Naive thymus-derived CD4-positive, alpha-beta T cell (primary cell): ENCODE measurements at regions of chr19 and their contacts with region 1.

Region 1: DNA sequence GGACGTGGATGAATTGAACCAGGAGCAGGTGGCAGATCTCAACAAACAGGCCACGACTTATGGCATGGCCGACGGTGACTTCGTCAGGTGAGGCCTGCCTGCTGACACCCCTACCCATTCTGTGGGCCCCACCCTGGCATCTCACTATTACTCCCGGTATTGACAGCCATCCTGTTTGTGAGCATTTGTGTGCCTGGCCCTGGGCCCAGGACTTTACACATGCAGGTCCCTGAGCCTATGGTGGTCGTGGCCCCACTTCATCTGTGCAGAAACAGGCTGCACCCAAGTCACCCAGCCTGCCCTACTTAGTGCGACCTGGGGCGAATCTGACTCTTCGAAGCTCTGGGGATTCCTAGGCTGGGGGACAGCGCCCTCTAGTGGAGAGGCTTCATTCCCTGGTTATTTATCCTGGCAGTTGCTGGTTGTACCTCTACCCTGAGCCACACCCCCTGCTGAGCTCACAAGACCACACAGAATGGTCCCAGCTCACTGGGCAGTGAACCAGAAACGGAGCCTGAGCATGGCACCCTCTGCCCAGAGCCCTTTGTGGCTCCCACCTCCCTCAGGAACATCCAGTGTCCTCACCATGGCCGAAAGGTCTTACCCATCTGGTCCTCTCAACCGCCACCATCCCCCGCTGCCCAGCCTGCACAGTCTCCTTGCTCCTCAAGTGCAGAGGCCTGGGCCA is 16.9 kb downstream of the ZNF296 start:
- DNase-seq: peak; percentile 60 to 86 (median 75)
- ATAC-seq: peak; percentile 95
- H3K4me3 ChIP-seq: no peak overlapping the region
- H3K4me3 Mint-ChIP-seq: no peak overlapping the region
- H3K27ac ChIP-seq: no peak overlapping the region
- H3K27ac Mint-ChIP-seq: peak overlapping the region in 8 of 9 donors; percentile 16 to 90 (median 66)
- H3K4me1 ChIP-seq: no peaks in the 10 kb centered on the region
- H3K4me1 Mint-ChIP-seq: peaks cover 0 to 15% (median 3%) of the 10 kb centered on the region in 7 donors
- H3K27me3 ChIP-seq: no peaks in the 10 kb centered on the region
- H3K27me3 Mint-ChIP-seq: no peaks in the 10 kb centered on the region

Region 2: GRCh38 chr19:44611812-44612295 is 447.6 kb before region 1 on chr19:
- CTCF ChIA-PET with region 1: no interaction called
- POLR2A ChIA-PET with region 1: no interaction called
- intact Hi-C with region 1: no loop called
- DNase-seq: no peak
- ATAC-seq: no peak
- H3K4me3 ChIP-seq: no peak overlapping the region
- H3K4me3 Mint-ChIP-seq: no peak overlapping the region
- H3K27ac ChIP-seq: no peak overlapping the region
- H3K27ac Mint-ChIP-seq: peak overlapping the region in 2 of 9 donors; percentile 47 to 51
- H3K4me1 ChIP-seq: peaks cover 0 to 10% of the 10 kb centered on the region in 2 donors
- H3K4me1 Mint-ChIP-seq: peaks cover 0 to 17% (median 13%) of the 10 kb centered on the region in 7 donors
- H3K27me3 ChIP-seq: no peaks in the 10 kb centered on the region
- H3K27me3 Mint-ChIP-seq: no peaks in the 10 kb centered on the region

Region 3: GRCh38 chr19:44903602-44904425 is 155.6 kb before region 1 on chr19:
- CTCF ChIA-PET with region 1: no interaction called
- POLR2A ChIA-PET with region 1: no interaction called
- intact Hi-C with region 1: loop called in 1 of 2 experiments (anchors 1 kb)
- DNase-seq: peak; percentile 49 to 86 (median 70)
- ATAC-seq: peak; percentile 81
- H3K4me3 ChIP-seq: no peak overlapping the region
- H3K4me3 Mint-ChIP-seq: no peak overlapping the region
- H3K27ac ChIP-seq: no peak overlapping the region
- H3K27ac Mint-ChIP-seq: peak overlapping the region in 2 of 9 donors; percentile 19 to 49
- H3K4me1 ChIP-seq: no peaks in the 10 kb centered on the region
- H3K4me1 Mint-ChIP-seq: peaks cover 5 to 13% (median 10%) of the 10 kb centered on the region in 7 donors
- H3K27me3 ChIP-seq: peaks cover 0 to 4% of the 10 kb centered on the region in 2 donors
- H3K27me3 Mint-ChIP-seq: peaks cover 18 to 22% (median 20%) of the 10 kb centered on the region in 5 donors

Region 4: DNA sequence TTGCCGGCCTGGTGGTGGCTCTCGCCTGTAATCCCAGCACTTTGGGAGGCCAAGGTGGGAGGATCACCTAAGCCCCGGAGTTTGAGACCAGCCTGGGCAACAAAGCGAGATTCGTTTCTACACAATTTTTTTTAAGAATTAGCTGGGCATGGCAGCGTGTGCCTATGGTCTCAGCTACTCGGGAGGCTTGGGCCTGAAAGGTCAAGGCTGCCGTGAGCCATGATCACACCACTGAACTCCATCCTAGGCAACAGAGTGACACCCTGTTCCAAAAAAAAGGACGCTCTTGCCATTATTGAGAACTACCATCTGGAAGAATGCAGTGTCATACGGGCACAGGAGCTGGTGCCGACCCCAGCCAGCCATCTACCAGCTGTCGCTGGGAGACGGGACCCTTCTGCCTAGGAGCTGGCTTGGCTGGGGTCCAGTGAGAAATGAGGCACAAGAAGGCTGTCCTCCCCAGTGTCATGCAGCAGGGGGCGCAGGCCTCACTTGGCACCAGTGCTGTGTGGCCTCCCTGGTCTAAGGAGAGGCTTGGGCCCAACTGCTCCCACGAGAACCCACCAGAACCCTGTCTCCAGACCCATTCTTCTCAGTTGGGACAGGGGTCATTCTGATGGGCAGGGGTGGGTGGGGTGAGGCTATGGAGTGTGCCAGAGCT is 70.4 kb before region 1 on chr19:
- CTCF ChIA-PET with region 1: interaction called, 6 read pairs
- POLR2A ChIA-PET with region 1: no interaction called
- intact Hi-C with region 1: loop called in 1 of 2 experiments (anchors 1 kb)
- DNase-seq: peak; percentile 34 to 64 (median 55)
- ATAC-seq: peak; percentile 86
- H3K4me3 ChIP-seq: no peak overlapping the region
- H3K4me3 Mint-ChIP-seq: no peak overlapping the region
- H3K27ac ChIP-seq: no peak overlapping the region
- H3K27ac Mint-ChIP-seq: peak overlapping the region in 2 of 9 donors; percentile 41 to 85
- H3K4me1 ChIP-seq: no peaks in the 10 kb centered on the region
- H3K4me1 Mint-ChIP-seq: peaks cover 0 to 2% (median 0%) of the 10 kb centered on the region in 7 donors
- H3K27me3 ChIP-seq: no peaks in the 10 kb centered on the region
- H3K27me3 Mint-ChIP-seq: no peaks in the 10 kb centered on the region

Region 5: DNA sequence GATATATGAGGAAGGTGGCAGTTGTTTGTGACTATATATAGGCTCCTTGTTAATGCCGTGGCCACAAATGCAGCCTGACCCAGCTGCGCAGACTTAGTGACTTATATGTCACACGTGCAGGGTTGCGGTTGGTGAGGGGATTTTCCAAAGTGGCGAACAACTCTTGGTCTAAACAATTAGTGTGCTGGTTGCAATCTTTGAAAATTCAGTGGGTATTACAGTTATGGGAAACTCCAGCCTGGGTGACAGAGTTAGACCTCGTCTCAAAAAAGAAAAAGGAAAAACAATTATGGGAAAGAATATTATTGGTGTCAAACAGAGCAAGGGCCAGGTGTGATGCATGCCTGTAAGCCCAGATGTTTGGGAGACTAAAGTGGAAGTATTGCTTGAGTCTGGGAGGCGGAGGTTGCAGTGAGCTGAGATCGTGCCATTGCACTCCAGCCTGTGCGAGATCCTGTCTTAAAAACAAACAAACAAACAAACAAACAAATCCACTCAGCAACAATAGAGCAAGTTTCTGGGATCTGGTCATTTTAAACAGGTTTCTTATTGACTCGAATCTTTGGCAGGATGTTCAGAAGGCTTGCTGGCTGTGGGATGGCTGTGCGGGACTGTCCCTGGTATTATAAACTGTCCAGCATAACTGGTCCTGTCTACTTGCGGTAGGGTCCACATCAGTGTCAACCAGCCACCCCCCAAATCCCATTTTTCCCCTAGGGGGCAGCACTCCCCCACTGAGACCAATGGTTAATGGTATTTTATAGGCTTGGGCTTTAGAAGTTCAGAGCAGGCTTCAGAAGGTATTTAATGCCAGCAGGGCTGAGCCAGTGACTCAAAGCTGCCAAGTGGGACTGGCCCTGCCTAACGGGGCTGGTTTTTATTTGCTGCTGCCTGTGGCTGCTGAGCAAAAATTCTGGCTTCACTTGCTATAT is 42.8 kb before region 1 on chr19:
- CTCF ChIA-PET with region 1: no interaction called
- POLR2A ChIA-PET with region 1: no interaction called
- intact Hi-C with region 1: loop called in 1 of 2 experiments (anchors 1 kb)
- DNase-seq: peak; percentile 28 to 75 (median 61)
- ATAC-seq: peak; percentile 81
- H3K4me3 ChIP-seq: peak overlapping the region; percentile 4
- H3K4me3 Mint-ChIP-seq: peak overlapping the region in 1 of 10 donors; percentile 25
- H3K27ac ChIP-seq: peak overlapping the region; percentile 40
- H3K27ac Mint-ChIP-seq: peak overlapping the region; percentile 23 to 89 (median 54)
- H3K4me1 ChIP-seq: peaks cover 0 to 11% of the 10 kb centered on the region in 2 donors
- H3K4me1 Mint-ChIP-seq: peaks cover 0 to 9% (median 0%) of the 10 kb centered on the region in 7 donors
- H3K27me3 ChIP-seq: no peaks in the 10 kb centered on the region
- H3K27me3 Mint-ChIP-seq: no peaks in the 10 kb centered on the region

Region 6: GRCh38 chr19:45038931-45039893 is 20.2 kb before region 1 on chr19 and contains the start of gene CLASRP:
- CTCF ChIA-PET with region 1: interaction called, 8 read pairs
- POLR2A ChIA-PET with region 1: interaction called, 3 read pairs
- intact Hi-C with region 1: loop called in 1 of 2 experiments (anchors 1 kb)
- DNase-seq: peak; percentile 73 to 92 (median 85)
- ATAC-seq: peak; percentile 96
- H3K4me3 ChIP-seq: peak within 1 kb of the TSS; percentile 85
- H3K4me3 Mint-ChIP-seq: peak within 1 kb of the TSS; percentile 89 to 100 (median 99)
- H3K27ac ChIP-seq: peak within 1 kb of the TSS; percentile 100
- H3K27ac Mint-ChIP-seq: peak within 1 kb of the TSS; percentile 90 to 99 (median 98)
- H3K4me1 ChIP-seq: peaks cover 15 to 24% of the 10 kb centered on the region in 2 donors
- H3K4me1 Mint-ChIP-seq: peaks cover 26 to 43% (median 33%) of the 10 kb centered on the region in 7 donors
- H3K27me3 ChIP-seq: no peaks in the 10 kb centered on the region
- H3K27me3 Mint-ChIP-seq: no peaks in the 10 kb centered on the region
- total RNA-seq, gene CLASRP: 94.7 to 185 (median 163) TPM

Region 7: DNA sequence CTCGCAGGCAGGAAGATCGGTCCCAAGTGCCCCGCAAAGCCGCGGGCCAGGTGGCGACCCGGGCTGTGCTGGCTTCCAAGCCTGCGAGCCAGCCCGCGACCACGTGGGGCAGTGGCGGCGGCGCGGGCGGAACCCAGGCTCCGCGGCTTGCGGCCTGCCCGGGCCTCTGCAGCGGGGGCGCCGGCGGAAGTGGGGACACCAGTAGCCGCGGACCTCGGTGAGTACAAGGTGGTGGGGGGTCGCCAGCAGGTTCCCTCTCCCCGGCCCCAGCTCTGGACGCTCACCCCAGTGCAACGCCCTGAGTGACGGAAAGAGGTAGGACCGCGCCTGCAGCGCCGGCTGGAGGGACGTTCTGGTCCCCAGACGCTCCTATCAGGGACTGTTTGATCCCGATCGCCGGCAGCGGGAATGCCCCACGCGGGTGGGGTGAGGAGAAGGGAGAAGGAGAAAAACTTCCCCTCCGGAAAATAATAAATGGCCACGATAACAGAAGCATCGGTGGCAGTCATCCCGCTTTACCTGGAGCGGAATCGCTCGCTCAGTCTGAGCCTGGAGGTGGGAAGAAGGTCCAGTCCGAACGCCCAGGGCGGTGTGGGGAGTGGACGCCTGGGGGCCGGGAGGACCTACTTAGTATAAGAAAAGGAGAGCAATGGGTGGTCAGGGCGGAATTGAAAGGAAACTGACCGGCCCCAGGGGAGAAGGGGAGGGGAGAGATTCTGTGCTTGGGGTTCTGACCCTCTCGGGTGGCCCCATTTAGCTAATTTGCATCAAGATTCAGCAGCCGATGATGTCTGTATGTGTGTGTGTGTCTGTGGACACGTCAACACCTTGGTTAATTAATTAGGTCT is 19.9 kb after region 1 on chr19 and contains the start of gene GEMIN7:
- CTCF ChIA-PET with region 1: interaction called, 8 read pairs
- POLR2A ChIA-PET with region 1: no interaction called
- intact Hi-C with region 1: loop called in 1 of 2 experiments (anchors 1 kb)
- DNase-seq: peak; percentile 60 to 90 (median 75)
- ATAC-seq: peak; percentile 76
- H3K4me3 ChIP-seq: peak within 1 kb of the TSS; percentile 99
- H3K4me3 Mint-ChIP-seq: peak within 1 kb of the TSS; percentile 87 to 99 (median 94)
- H3K27ac ChIP-seq: peak within 1 kb of the TSS; percentile 86
- H3K27ac Mint-ChIP-seq: peak within 1 kb of the TSS; percentile 79 to 94 (median 84)
- H3K4me1 ChIP-seq: peaks cover 22 to 31% of the 10 kb centered on the region in 2 donors
- H3K4me1 Mint-ChIP-seq: peaks cover 32 to 53% (median 48%) of the 10 kb centered on the region in 7 donors
- H3K27me3 ChIP-seq: no peaks in the 10 kb centered on the region
- H3K27me3 Mint-ChIP-seq: no peaks in the 10 kb centered on the region
- total RNA-seq, gene GEMIN7: 4.9 to 31.6 (median 16.6) TPM